K562 (cell line): ENCODE measurements at regions of chr5 and their contacts with region 1.

Region 1: DNA sequence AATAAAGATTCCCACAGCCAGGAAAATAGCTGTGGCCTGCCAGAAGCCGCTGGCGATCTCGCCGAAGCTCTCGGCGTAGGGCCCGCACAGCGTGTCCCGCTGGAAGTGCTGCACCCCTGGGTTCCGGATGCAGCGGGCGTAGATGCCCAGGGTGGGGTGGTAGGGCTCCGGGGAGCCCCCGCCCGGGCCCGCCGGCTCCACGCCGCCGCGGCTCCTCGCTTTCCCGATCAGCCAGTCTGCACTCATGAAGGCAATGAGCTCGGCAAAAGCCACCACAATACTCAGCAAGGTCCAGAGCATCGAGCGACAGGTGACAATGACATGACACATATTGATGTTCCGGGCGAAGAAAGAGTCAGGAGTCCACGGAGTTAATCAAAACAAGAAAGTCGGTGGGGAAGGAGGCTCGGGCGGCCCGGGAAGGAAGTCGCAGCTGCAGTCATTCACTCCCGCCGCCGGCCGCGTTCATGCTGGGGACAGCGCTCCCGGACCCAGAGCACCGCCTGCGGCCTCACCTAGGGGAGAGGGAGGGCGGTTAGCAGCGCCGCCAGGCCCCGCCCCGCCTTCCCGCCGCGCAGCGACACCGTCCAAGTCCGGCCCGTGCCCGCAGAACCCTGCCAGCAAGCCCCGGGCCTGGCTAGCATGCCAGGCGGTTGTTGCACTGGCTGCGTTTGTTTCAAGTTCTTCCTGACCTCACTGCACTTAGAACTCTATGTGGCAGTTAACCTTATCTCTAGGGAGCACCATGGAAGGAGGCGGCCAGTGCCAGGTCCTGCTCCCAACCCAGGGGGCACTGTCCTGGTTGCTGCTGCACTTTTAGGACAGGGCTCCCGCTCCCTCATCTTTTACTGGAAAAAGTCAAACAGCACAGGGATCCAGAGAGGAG is 138.4 kb downstream of the LHFPL2 start:
- DNase-seq: peak; percentile 74 to 82 (median 78)
- ATAC-seq: peak; percentile 94
- H3K4me3 ChIP-seq: peak overlapping the region; percentile 49
- H3K27ac ChIP-seq: peak overlapping the region; percentile 61
- H3K4me1 ChIP-seq: peaks cover 14 to 35% of the 10 kb centered on the region in 2 experiments
- H3K27me3 ChIP-seq: no peaks in the 10 kb centered on the region
- CTCF ChIP-seq: peak; percentile 10 to 53 (median 29); a peak in 4 of 6 replicates
- EP300 ChIP-seq: no peak
- POLR2A ChIP-seq: no peak
- RAD21 ChIP-seq: 0 out of 4 replicates have a peak, but pooled peaks of 1 of the 2 experiments have one; percentile 2

Region 2: DNA sequence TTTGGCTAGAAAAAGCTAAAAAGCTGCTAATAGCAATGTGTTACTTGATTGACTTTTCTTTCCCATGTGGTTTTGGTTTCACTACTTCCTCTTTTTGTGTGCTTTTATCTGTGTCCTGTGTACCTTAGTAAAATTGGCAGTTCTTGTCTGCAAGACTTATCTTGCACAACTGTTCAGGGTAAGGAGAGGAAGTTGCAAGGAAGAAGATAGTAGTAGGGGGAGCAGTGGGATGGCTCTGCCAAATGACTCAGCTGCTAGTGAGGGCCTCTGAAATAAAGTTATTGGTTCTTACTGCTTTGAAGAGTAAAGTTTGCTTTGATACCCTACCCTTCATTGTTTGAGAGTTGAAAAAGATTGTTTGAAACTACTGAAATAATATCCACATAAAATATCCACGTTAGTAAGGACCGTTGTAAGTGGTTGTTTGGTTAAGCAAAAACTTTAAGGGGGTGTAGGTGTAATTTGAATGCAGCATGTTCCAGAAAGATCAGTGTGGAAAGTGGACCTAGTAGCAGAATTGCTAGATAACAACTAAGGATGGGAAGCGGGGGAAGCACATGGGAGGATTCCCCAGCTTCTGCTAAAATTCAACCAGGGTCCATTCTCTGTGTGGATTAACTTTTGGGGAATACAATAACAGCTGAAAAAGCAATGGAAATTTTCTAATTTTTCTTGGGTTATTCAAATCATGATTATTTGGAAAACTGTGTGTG is 26.2 kb before region 1 on chr5:
- CTCF ChIA-PET with region 1: no interaction called
- POLR2A ChIA-PET with region 1: interaction called, 9 read pairs
- in situ Hi-C with region 1: no loop called
- intact Hi-C with region 1: loop called (anchors 2 kb)
- DNase-seq: peak; percentile 22 to 91 (median 61)
- ATAC-seq: peak; percentile 98
- H3K4me3 ChIP-seq: no peak overlapping the region
- H3K27ac ChIP-seq: peak overlapping the region; percentile 74
- H3K4me1 ChIP-seq: peaks cover 8 to 48% of the 10 kb centered on the region in 2 experiments
- H3K27me3 ChIP-seq: no peaks in the 10 kb centered on the region
- CTCF ChIP-seq: no peak
- EP300 ChIP-seq: peak; percentile 97
- POLR2A ChIP-seq: no peak
- RAD21 ChIP-seq: no peak; a peak in 2 of 4 replicates

Region 3: GRCh38 chr5:80407735-80408482 is 1897.8 kb after region 1 on chr5 and contains the start of gene ZFYVE16:
- CTCF ChIA-PET with region 1: no interaction called
- POLR2A ChIA-PET with region 1: no interaction called
- in situ Hi-C with region 1: loop called (anchors 25 kb)
- intact Hi-C with region 1: no loop called
- DNase-seq: peak; percentile 96 to 98 (median 98)
- ATAC-seq: peak; percentile 91
- H3K4me3 ChIP-seq: peak within 1 kb of the TSS; percentile 70
- H3K27ac ChIP-seq: peak within 1 kb of the TSS; percentile 94
- H3K4me1 ChIP-seq: peaks cover 6 to 14% of the 10 kb centered on the region in 2 experiments; a peak in 2 of 5 replicates
- H3K27me3 ChIP-seq: no peaks in the 10 kb centered on the region
- CTCF ChIP-seq: peak; percentile 34 to 49 (median 40); a peak in 1 of 6 replicates
- EP300 ChIP-seq: no peak
- POLR2A ChIP-seq: peak; percentile 95
- RAD21 ChIP-seq: peak in 1 of 2 experiments; percentile 31; a peak in 3 of 4 replicates
- polyA plus RNA-seq, gene ZFYVE16: 6.0 to 8.4 TPM